GM12878 (cell line): ENCODE measurements at regions of chr15 and their contacts with region 1.

Region 1: GRCh38 chr15:70097337-70098169 is at the start of gene TLE3:
- DNase-seq: peak; percentile 85
- ATAC-seq: peak; percentile 74
- H3K4me3 ChIP-seq: peak within 1 kb of the TSS; percentile 97
- H3K27ac ChIP-seq: peak within 1 kb of the TSS; percentile 79
- H3K4me1 ChIP-seq: peaks cover 25% of the 10 kb centered on the region
- H3K27me3 ChIP-seq: peaks cover 3 to 8% of the 10 kb centered on the region in 2 experiments; a peak in 3 of 4 replicates
- CTCF ChIP-seq: peak; percentile 32 to 61 (median 45); a peak in 5 of 6 replicates
- EP300 ChIP-seq: no peak
- POLR2A ChIP-seq: peak; percentile 90
- RAD21 ChIP-seq: peak; percentile 63
- polyA plus RNA-seq, gene TLE3: 1.2 to 2.2 TPM

Region 2: DNA sequence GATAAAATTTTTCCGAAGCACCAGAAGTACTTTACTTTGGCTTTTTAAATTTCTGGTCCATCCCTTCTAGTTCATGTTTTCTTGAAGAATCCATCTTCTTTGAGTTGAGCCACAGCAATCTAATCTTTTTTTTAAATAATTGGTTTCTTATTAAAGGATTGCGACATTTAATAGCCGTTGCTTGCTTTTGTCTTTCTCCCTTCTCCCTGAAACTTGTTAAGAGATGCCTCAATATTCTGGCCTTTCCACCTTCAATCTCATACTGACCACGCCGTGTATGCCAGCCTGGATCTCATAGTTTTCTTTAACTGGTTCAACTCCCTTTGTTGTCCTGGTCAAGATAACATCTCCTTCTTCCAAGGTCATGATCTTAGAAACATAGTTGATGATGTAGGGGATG is 663.3 kb before region 1 on chr15:
- CTCF ChIA-PET with region 1: no interaction called
- POLR2A ChIA-PET with region 1: no interaction called
- RAD21 ChIA-PET with region 1: no interaction called
- SMC1A ChIA-PET with region 1: no interaction called
- in situ Hi-C with region 1: no loop called
- intact Hi-C with region 1: no loop called
- DNase-seq: no peak
- ATAC-seq: no peak
- H3K4me3 ChIP-seq: no peak overlapping the region
- H3K27ac ChIP-seq: no peak overlapping the region
- H3K4me1 ChIP-seq: no peaks in the 10 kb centered on the region
- H3K27me3 ChIP-seq: no peaks in the 10 kb centered on the region
- CTCF ChIP-seq: no peak
- EP300 ChIP-seq: no peak
- POLR2A ChIP-seq: no peak
- RAD21 ChIP-seq: no peak

Region 3: DNA sequence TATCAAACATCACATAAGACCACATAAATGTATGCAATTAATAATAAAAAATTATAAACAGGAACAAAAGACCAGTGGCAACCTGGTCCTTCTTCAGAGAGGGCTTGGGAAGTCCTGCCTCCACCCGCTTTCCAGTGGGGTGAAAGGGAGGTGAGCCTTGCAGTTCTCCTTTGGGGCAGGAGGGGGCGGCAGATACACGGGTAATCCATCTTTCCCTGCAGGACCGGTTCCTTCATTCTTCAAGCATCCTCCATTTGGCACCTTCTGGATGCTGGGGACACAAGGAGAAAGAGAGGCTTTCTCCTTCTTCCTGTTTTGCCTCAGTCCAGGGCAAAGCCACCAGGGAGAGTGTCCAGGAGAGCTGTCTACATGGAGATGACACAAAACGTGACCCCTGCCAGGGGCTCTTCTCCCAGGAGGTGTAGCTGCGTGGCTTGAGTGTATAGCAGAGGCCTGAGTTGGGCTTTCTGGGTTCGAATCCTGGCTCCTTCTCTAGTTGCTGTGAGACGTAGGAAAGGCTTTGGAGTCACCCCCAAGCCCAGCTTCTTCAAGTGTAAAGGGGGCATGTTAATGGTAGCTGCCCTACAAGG is 621.7 kb before region 1 on chr15:
- CTCF ChIA-PET with region 1: no interaction called
- POLR2A ChIA-PET with region 1: no interaction called
- RAD21 ChIA-PET with region 1: interaction called, 4 read pairs
- SMC1A ChIA-PET with region 1: no interaction called
- in situ Hi-C with region 1: no loop called
- intact Hi-C with region 1: loop called (anchors 5 kb)
- DNase-seq: no peak
- ATAC-seq: peak; percentile 89
- H3K4me3 ChIP-seq: no peak overlapping the region
- H3K27ac ChIP-seq: no peak overlapping the region
- H3K4me1 ChIP-seq: no peaks in the 10 kb centered on the region
- H3K27me3 ChIP-seq: no peaks in the 10 kb centered on the region
- CTCF ChIP-seq: peak; percentile 95 to 97 (median 97); a peak in 5 of 6 replicates
- EP300 ChIP-seq: no peak
- POLR2A ChIP-seq: no peak
- RAD21 ChIP-seq: peak; percentile 91

Region 4: DNA sequence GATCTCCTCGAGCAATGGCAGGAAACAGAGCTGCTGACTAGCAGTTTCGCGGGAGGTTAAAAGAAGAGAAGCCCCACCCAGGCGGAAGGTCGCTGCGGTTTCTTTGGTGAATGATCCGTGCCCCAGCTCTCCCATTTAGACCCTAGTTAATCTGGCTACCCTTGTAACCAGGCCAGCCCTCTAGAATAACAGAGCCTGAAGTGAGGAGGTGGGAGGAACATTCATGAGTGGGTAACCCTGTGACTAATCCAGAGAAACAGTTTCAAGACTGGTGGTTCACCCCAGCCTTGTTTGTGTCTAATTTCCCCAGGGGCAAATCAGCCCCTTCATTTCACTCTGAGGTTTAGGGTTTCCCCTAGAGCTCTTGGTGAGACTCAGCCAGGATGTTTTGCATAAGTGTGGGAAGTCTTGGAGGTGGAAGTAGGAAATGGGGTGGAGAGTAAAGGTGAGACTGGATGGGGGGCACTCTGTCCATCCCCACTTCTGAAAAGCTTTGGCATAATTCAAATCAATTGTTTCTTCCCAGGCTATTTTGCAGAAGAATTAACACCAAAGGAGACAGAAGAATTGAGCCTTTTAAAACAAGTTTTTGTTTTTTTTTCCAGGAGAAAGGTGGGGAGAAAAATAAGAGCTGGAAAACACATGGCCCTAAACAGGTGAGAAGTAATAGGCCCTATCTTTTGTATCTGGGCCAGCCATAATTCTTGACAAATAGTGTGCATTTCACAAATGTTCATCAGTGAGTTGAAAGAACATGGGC is 341.8 kb before region 1 on chr15:
- CTCF ChIA-PET with region 1: interaction called, 3 read pairs
- POLR2A ChIA-PET with region 1: interaction called, 6 read pairs
- RAD21 ChIA-PET with region 1: interaction called, 5 read pairs
- SMC1A ChIA-PET with region 1: interaction called, 5 read pairs
- in situ Hi-C with region 1: no loop called
- intact Hi-C with region 1: loop called (anchors 5 kb)
- DNase-seq: peak; percentile 93
- ATAC-seq: peak; percentile 93
- H3K4me3 ChIP-seq: no peak overlapping the region
- H3K27ac ChIP-seq: no peak overlapping the region
- H3K4me1 ChIP-seq: peaks cover 37% of the 10 kb centered on the region
- H3K27me3 ChIP-seq: no peaks in the 10 kb centered on the region
- CTCF ChIP-seq: no peak
- EP300 ChIP-seq: peak; percentile 77 to 85; a peak in 3 of 4 replicates
- POLR2A ChIP-seq: no peak
- RAD21 ChIP-seq: no peak

Region 5: DNA sequence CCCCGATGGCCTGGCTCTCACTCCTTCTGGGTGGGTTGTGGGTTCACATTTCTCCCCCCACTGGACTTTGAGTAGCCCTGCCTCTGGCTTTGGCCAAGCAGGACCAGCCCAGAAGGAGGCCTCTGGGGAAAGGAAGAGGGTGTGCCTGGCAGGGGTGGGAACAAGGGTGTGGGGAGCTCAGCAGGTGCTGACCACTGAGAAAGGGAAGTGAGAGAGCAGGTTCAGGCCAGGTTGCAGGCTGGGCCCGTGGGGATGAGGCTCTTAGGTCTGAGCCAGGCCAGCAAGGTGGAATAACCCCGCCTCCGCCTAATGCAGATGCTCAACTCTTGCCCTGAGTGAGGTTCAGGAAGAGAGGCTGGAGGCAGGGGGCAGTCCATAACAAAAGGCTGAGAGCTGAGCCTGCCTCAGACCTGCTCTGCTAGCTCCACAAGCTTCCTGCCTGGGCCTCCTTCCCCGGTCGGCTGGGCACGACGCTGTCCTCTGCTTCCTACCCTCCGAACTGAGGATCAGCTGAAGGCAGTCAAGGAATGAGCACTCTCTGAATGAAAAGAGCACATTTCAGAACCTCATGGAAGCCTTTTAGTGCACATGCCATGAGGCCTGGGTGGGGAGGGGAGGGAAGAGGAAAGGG is 82.6 kb before region 1 on chr15:
- CTCF ChIA-PET with region 1: interaction called, 8 read pairs
- POLR2A ChIA-PET with region 1: interaction called, 5 read pairs
- RAD21 ChIA-PET with region 1: interaction called, 31 read pairs
- SMC1A ChIA-PET with region 1: interaction called, 6 read pairs
- in situ Hi-C with region 1: no loop called
- intact Hi-C with region 1: loop called (anchors 2 kb)
- DNase-seq: peak; percentile 93
- ATAC-seq: peak; percentile 89
- H3K4me3 ChIP-seq: peak overlapping the region; percentile 10; the same call in 1 of the 2 replicates
- H3K27ac ChIP-seq: peak overlapping the region; percentile 84
- H3K4me1 ChIP-seq: peaks cover 60% of the 10 kb centered on the region
- H3K27me3 ChIP-seq: no peaks in the 10 kb centered on the region
- CTCF ChIP-seq: peak in 1 of 3 experiments; percentile 54; a peak in 2 of 6 replicates
- EP300 ChIP-seq: peak; percentile 76 to 79; a peak in 3 of 4 replicates
- POLR2A ChIP-seq: peak; percentile 79
- RAD21 ChIP-seq: peak; percentile 44; the same call in 1 of the 2 replicates

Region 6: DNA sequence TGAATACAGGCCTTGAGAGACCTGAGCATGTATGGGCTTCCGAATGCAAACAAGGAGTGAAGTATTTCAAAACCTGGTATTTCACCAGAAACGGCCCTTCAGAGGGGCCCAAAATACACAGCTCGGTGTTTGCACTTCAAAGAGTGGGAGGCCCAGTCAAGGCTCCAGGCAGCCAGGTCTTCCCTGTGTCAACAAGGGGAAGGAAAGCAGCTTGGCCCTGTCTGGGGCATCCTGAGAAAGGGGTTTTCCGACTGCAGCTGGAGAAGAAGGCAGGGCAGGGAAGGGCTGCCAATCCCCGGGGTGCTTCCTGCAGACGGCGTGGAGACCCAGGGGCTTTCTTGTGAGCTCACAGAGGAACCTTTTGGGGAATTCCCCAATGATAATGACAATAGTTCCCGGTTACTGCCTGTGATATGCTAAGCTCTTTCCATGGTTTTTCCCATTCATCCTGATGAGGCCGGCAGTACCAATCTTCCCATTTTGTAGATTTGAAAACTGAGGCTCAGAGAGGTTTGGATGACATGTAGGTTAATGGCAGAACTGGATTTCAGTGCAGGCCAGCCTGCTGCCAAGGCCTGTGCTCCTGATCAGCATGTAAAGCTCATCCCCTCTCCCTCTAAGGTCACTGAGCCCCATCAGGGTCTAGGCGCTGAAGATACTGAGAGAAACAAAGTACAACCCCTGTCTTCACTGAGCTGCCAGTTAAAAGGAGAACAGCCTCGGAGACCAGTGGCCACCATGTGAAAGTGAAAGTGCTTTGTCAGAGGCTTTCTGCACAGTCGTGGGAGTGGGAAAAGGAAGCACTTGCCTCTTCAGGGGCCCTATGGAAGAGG is 43.2 kb after region 1 on chr15:
- CTCF ChIA-PET with region 1: interaction called, 6 read pairs
- POLR2A ChIA-PET with region 1: interaction called, 10 read pairs
- RAD21 ChIA-PET with region 1: interaction called, 34 read pairs
- SMC1A ChIA-PET with region 1: interaction called, 8 read pairs
- in situ Hi-C with region 1: no loop called
- intact Hi-C with region 1: loop called (anchors 5 kb)
- DNase-seq: no peak
- ATAC-seq: peak; percentile 88
- H3K4me3 ChIP-seq: peak overlapping the region; percentile 55
- H3K27ac ChIP-seq: peak overlapping the region; percentile 78
- H3K4me1 ChIP-seq: peaks cover 28% of the 10 kb centered on the region
- H3K27me3 ChIP-seq: no peaks in the 10 kb centered on the region
- CTCF ChIP-seq: no peak
- EP300 ChIP-seq: peak in 1 of 2 experiments; percentile 37; a peak in 1 of 4 replicates
- POLR2A ChIP-seq: no peak
- RAD21 ChIP-seq: no peak

Region 7: GRCh38 chr15:70266412-70267121 is 169.0 kb after region 1 on chr15:
- CTCF ChIA-PET with region 1: interaction called, 3 read pairs
- POLR2A ChIA-PET with region 1: interaction called, 10 read pairs
- RAD21 ChIA-PET with region 1: interaction called, 4 read pairs
- SMC1A ChIA-PET with region 1: no interaction called
- in situ Hi-C with region 1: no loop called
- intact Hi-C with region 1: no loop called
- DNase-seq: no peak
- ATAC-seq: peak; percentile 51
- H3K4me3 ChIP-seq: no peak overlapping the region
- H3K27ac ChIP-seq: no peak overlapping the region
- H3K4me1 ChIP-seq: peaks cover 40% of the 10 kb centered on the region
- H3K27me3 ChIP-seq: no peaks in the 10 kb centered on the region; a peak in 2 of 4 replicates
- CTCF ChIP-seq: no peak
- EP300 ChIP-seq: no peak
- POLR2A ChIP-seq: no peak
- RAD21 ChIP-seq: no peak

Region 8: DNA sequence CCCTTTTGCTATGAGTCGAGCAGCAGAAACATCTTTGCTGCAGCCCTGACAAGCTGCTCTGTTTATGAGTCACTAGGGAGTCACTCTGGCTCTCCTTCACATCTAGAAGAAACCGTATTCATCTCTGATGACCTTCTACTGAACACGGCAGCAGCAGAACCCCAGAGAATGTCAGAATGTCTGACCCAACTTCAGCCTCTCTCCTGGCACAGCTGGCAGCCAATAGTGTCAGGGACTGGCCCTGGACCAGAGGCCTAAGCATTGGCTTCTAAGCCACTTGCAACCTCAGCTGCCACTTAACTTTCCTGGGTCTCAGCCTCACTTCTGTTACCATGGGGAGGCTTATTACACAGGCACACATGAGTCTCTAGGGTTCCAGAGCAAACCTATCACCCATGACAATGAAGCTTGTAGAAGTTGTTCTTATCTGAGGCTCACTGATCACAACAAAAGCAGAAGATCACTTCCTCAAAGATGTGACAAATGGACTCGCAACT is 184.3 kb after region 1 on chr15:
- CTCF ChIA-PET with region 1: no interaction called
- POLR2A ChIA-PET with region 1: no interaction called
- RAD21 ChIA-PET with region 1: no interaction called
- SMC1A ChIA-PET with region 1: no interaction called
- in situ Hi-C with region 1: no loop called
- intact Hi-C with region 1: no loop called
- DNase-seq: no peak
- ATAC-seq: peak; percentile 61
- H3K4me3 ChIP-seq: no peak overlapping the region
- H3K27ac ChIP-seq: no peak overlapping the region
- H3K4me1 ChIP-seq: 0 out of 2 replicates have a peak, but pooled peaks cover 3% of the 10 kb centered on the region
- H3K27me3 ChIP-seq: no peaks in the 10 kb centered on the region; a peak in 1 of 4 replicates
- CTCF ChIP-seq: no peak
- EP300 ChIP-seq: no peak
- POLR2A ChIP-seq: no peak
- RAD21 ChIP-seq: no peak

Region 9: DNA sequence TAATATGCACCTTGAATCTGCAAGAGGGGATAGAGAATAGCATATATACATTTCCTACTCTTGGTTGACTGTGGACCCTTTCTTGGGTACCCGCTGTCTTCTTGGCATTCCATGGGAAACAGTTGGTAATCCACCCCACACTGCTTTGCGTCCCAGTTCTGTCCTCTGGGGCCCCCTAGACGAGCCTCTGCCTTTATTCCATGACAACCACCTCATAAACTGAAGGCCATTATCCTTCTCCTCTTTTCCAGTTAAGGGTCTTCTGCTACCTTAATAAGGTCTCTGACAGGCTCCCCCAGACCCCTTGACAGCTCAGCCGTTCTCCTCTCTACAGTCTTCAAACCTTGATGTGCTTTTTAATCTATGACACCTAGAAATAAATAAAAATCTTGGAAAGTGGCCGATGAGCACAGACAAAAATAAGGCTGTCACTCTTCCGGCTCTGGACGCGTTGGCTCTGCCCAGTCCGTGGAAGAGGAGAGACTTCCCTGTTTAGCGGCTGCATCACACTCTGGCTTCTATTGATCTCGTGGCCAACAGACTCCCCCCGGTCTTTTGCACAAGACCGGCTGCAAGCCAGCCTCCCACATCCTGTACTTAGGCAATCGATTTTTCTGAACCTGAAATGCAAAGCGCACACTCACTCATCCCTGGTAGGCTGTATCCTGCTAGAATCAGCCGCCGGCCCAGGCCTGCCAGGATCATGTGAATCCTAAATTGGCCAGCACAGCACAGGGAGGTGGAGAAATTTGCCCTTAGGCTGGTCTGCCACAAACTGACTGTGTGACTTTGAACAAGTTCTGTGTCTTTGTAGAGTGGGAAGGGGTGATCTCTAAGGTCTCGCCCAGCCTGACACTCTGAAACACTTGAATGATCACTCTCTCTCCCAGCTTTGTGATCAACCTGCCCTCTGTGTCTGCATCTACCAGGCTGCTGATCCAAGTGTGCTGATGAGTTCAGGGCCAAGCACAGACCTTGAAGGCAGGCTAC is 251.3 kb after region 1 on chr15:
- CTCF ChIA-PET with region 1: no interaction called
- POLR2A ChIA-PET with region 1: no interaction called
- RAD21 ChIA-PET with region 1: no interaction called
- SMC1A ChIA-PET with region 1: no interaction called
- in situ Hi-C with region 1: no loop called
- intact Hi-C with region 1: no loop called
- DNase-seq: no peak
- ATAC-seq: no peak
- H3K4me3 ChIP-seq: no peak overlapping the region
- H3K27ac ChIP-seq: no peak overlapping the region
- H3K4me1 ChIP-seq: no peaks in the 10 kb centered on the region
- H3K27me3 ChIP-seq: peaks cover 6% of the 10 kb centered on the region in 2 experiments; a peak in 3 of 4 replicates
- CTCF ChIP-seq: no peak
- EP300 ChIP-seq: no peak
- POLR2A ChIP-seq: no peak
- RAD21 ChIP-seq: no peak

Region 10: GRCh38 chr15:70528270-70528706 is 430.7 kb after region 1 on chr15:
- CTCF ChIA-PET with region 1: no interaction called
- POLR2A ChIA-PET with region 1: no interaction called
- RAD21 ChIA-PET with region 1: no interaction called
- SMC1A ChIA-PET with region 1: no interaction called
- in situ Hi-C with region 1: no loop called
- intact Hi-C with region 1: no loop called
- DNase-seq: peak; percentile 66
- ATAC-seq: peak; percentile 98
- H3K4me3 ChIP-seq: no peak overlapping the region
- H3K27ac ChIP-seq: peak overlapping the region; percentile 75
- H3K4me1 ChIP-seq: peaks cover 15% of the 10 kb centered on the region
- H3K27me3 ChIP-seq: no peaks in the 10 kb centered on the region
- CTCF ChIP-seq: no peak
- EP300 ChIP-seq: no peak
- POLR2A ChIP-seq: peak; percentile 71
- RAD21 ChIP-seq: no peak